ENCODE measurements at regions of chr5 and their contacts with region 1.

Region 1: DNA sequence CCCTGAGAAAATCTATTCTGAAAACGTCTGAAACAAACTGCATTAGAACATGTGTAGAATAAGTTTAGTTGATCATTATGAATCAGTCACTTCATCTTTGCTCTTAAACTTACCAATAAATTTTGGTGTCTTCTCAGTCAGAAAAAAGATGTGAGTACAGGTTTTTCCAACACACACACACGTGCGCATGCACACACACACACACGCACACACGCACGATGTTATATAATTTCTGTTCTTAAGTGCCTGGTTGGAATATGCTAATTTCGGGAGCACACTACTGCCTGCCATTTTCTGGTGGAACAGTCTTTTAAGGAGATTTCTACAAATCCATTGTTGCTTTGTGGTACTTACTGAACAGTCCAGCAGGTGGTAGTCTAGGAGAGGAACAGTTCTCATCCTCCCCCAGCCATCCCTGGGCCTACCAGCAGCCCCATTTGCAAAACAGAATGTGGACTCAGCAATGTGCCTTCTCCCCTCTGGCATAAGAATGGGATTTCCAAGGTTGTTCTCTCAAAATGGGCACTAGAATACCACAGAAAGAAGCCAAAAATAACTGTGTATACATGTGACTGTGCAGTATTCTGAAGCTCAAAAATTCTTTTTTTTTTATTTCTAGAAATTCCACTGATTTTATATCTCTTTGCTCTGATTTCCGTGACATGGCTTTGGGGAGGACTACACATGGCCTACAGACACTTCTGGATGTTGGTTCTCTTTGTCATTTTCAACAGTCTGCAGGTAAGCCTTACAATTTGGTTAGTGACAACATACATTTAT is 281.3 kb downstream of the ARRDC3 start:
- DNase-seq: peak; percentile 80
- ATAC-seq: peak; percentile 97

Region 2: GRCh38 chr5:90932052-90932699 is 169.6 kb before region 1 on chr5:
- intact Hi-C with region 1: loop called (anchors 10 kb)
- DNase-seq: peak; percentile 61
- ATAC-seq: peak; percentile 87

Region 3: DNA sequence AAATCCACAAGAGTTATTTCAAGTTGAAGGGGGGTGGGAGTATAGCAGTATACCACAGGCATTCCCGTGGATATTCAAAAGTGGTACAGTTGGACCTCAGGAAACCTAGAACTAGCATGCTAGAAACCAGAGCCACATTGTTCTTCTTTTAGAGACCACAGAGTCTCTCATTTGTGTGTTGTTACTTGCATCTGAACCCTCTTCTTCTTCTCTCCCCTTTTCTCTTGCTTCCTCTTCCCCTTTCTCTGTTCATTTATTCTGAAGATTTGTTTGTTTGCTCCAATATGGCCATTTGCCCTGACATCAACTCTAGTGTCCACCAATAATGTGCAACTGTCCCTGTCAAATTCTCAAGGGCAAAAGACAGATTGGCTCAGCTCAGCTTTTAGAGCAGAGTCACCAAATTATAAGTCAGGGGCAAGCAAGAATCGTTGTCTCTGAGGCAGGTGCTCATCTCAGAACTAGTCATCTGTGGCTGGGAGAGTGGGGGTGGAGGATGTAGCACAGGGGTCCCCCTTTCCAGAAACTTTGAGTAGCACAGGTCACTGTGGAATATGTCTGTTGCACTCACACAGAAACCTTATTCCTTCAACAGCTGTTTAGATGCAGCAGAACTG is 39.7 kb before region 1 on chr5:
- intact Hi-C with region 1: no loop called
- DNase-seq: no peak
- ATAC-seq: no peak

Region 4: DNA sequence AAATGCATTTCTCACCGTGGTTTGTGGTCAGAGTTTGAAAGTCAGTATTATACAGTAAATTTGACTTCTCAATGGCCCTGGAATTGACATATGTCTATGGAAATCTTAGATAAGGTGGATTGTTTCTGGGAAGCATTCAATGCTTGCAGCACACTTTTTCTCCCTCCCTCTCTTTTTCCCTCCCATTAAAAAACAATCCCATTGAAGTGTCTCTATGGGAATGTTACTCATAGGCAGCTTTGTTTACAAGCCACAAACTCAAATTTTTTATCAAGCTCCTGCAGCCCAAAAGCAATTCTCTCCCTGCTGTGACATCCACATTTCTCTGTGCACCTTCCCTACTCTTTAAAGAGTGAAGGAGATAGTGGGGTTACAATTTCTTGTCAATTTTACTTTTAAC is 10.8 kb before region 1 on chr5:
- intact Hi-C with region 1: no loop called
- DNase-seq: no peak
- ATAC-seq: no peak

Region 5: GRCh38 chr5:91384671-91385430 is 283.1 kb after region 1 on chr5:
- intact Hi-C with region 1: loop called (anchors 2 kb)
- DNase-seq: no peak
- ATAC-seq: no peak

Measured in sciatic nerve (tissue), 2 donors.